Caco-2 (cell line): ENCODE measurements at regions of chr4 and their contacts with region 1.

Region 1: GRCh38 chr4:153643406-153644383 is 40.4 kb upstream of the TLR2 start:
- DNase-seq: peak in 1 of 2 experiments; percentile 14
- H3K4me3 ChIP-seq: no peak overlapping the region
- H3K4me3 Mint-ChIP-seq: no peak overlapping the region
- H3K27ac Mint-ChIP-seq: no peak overlapping the region
- H3K4me1 ChIP-seq: no peaks in the 10 kb centered on the region
- H3K4me1 Mint-ChIP-seq: peaks cover 6% of the 10 kb centered on the region
- H3K27me3 ChIP-seq: no peaks in the 10 kb centered on the region
- H3K27me3 Mint-ChIP-seq: no peaks in the 10 kb centered on the region
- CTCF ChIP-seq: peak in 1 of 2 experiments; percentile 30

Region 2: DNA sequence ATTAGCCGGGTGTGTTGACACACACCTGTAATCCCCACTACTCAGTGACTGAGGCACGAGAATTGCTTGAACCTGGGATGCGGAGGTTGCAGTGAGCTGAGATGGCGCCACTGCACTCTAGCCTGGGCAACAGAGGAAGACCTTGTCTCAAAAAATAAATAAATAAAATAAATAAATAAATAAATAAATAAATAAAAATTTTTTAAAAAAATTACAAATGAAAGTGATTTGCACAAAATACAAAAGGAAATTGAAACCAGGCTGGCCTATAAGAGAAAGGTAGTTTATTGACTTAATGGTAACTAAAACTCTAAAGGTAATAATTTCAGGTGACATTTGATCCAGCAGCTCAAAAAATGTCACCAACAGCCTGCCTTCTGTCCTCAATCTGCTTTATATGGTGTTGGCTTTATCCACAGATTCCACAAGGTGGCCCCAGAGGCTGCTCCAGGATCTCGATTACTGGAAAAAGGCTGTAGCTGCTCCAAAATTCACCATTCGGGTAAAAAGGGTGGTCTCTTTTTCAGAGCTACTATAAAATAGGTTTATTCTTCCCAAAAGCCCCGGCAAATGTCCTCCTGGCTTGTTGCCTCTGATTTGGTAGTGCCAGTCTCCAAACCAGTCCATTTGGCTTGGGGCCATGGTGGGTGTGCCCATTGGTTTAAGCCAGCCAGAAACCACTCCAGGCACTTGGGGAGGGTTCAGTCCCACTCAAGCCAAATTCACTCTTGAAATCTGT is 500.8 kb before region 1 on chr4:
- CTCF ChIA-PET with region 1: interaction called, 3 read pairs
- POLR2A ChIA-PET with region 1: no interaction called
- intact Hi-C with region 1: loop called (anchors 5 kb)
- DNase-seq: peak; percentile 74 to 78
- H3K4me3 ChIP-seq: no peak overlapping the region
- H3K4me3 Mint-ChIP-seq: no peak overlapping the region
- H3K27ac Mint-ChIP-seq: peak overlapping the region; percentile 53
- H3K4me1 ChIP-seq: peaks cover 8% of the 10 kb centered on the region
- H3K4me1 Mint-ChIP-seq: peaks cover 13% of the 10 kb centered on the region
- H3K27me3 ChIP-seq: no peaks in the 10 kb centered on the region
- H3K27me3 Mint-ChIP-seq: no peaks in the 10 kb centered on the region
- CTCF ChIP-seq: peak; percentile 73 to 78

Region 3: DNA sequence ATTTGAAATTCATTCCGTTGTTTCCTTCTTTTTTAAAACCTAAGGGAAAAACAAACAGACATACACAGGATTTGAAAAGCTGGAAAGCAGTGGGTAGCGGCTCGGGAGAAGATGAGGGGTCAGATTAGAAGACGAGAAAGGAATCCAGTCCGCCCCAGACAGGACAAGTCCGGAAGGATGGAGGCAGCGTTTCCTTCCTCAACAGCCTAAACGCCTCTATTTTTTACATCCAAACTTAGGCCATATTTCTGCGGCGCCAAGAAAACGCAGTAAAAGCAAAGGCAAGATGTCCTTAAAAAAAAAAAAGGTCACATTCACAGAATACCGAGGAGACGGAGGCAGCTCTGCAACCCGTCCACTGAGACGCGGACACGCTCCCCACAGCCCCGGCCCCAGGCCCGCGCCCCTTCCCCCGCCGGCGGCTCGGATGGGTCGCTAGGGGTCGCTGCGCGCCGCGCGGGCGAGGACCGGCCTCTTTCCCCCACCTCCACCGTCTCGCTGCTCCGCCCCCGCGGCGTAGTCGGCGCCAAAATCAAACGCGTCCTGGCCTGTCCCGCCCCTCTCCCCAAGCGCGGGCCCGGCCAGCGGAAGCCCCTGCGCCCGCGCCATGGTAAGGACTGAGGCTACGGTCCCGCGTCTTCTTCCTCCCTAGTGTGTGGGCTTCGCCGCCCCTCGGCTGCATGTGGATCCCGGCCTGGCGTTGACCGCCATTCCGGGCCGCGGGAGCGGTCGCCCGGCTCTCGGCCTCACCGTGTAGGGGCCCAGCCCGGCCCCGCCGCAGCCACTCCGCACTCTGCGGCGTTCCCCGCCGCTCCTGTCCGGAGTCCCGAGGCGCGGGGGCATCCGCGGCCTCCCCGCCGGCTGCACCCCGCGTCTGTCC is 299.3 kb before region 1 on chr4 and contains the start of gene MND1:
- CTCF ChIA-PET with region 1: interaction called, 5 read pairs
- POLR2A ChIA-PET with region 1: no interaction called
- intact Hi-C with region 1: loop called (anchors 2 kb)
- DNase-seq: peak; percentile 89 to 94
- H3K4me3 ChIP-seq: peak within 1 kb of the TSS; percentile 88
- H3K4me3 Mint-ChIP-seq: peak within 1 kb of the TSS; percentile 81
- H3K27ac Mint-ChIP-seq: peak within 1 kb of the TSS; percentile 82
- H3K4me1 ChIP-seq: peaks cover 17% of the 10 kb centered on the region
- H3K4me1 Mint-ChIP-seq: peaks cover 20% of the 10 kb centered on the region
- H3K27me3 ChIP-seq: no peaks in the 10 kb centered on the region
- H3K27me3 Mint-ChIP-seq: no peaks in the 10 kb centered on the region
- CTCF ChIP-seq: peak; percentile 62 to 95
- total RNA-seq, gene MND1: 19.8 and 21.8 TPM in 2 replicates

Region 4: GRCh38 chr4:153432968-153433753 is 210.5 kb before region 1 on chr4:
- CTCF ChIA-PET with region 1: no interaction called
- POLR2A ChIA-PET with region 1: no interaction called
- intact Hi-C with region 1: loop called (anchors 5 kb)
- DNase-seq: peak; percentile 69 to 73
- H3K4me3 ChIP-seq: no peak overlapping the region
- H3K4me3 Mint-ChIP-seq: no peak overlapping the region
- H3K27ac Mint-ChIP-seq: peak overlapping the region; percentile 6
- H3K4me1 ChIP-seq: no peaks in the 10 kb centered on the region; the same call in 1 of the 2 replicates
- H3K4me1 Mint-ChIP-seq: peaks cover 7% of the 10 kb centered on the region
- H3K27me3 ChIP-seq: no peaks in the 10 kb centered on the region
- H3K27me3 Mint-ChIP-seq: no peaks in the 10 kb centered on the region
- CTCF ChIP-seq: peak; percentile 37 to 67

Region 5: GRCh38 chr4:153555730-153556433 is 87.8 kb before region 1 on chr4:
- CTCF ChIA-PET with region 1: no interaction called
- POLR2A ChIA-PET with region 1: no interaction called
- intact Hi-C with region 1: no loop called
- DNase-seq: no peak
- H3K4me3 ChIP-seq: no peak overlapping the region
- H3K4me3 Mint-ChIP-seq: no peak overlapping the region
- H3K27ac Mint-ChIP-seq: no peak overlapping the region
- H3K4me1 ChIP-seq: no peaks in the 10 kb centered on the region
- H3K4me1 Mint-ChIP-seq: peaks cover 6% of the 10 kb centered on the region
- H3K27me3 ChIP-seq: no peaks in the 10 kb centered on the region
- H3K27me3 Mint-ChIP-seq: no peaks in the 10 kb centered on the region
- CTCF ChIP-seq: no peak

Region 6: DNA sequence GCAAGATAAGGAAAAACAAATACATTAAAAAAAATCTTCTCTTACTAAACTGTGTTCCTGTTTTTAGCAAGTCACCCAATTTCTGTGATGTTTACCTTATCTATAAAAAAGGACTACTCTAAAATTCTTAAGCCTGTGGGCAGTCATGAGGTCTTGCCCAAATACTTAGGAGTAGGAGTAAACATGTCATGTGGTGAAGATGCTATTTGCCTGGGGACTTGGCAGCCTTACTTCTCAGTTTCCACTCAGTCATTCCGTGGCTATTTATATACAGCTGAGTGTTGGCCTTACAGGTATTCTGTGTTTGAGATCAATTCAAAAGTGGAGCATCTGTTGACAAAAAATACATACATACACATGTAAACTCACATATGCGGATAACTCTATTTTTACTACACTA is 49.5 kb before region 1 on chr4:
- CTCF ChIA-PET with region 1: no interaction called
- POLR2A ChIA-PET with region 1: no interaction called
- intact Hi-C with region 1: loop called (anchors 1 kb)
- DNase-seq: no peak
- H3K4me3 ChIP-seq: no peak overlapping the region
- H3K4me3 Mint-ChIP-seq: no peak overlapping the region
- H3K27ac Mint-ChIP-seq: no peak overlapping the region
- H3K4me1 ChIP-seq: no peaks in the 10 kb centered on the region
- H3K4me1 Mint-ChIP-seq: no peaks in the 10 kb centered on the region
- H3K27me3 ChIP-seq: no peaks in the 10 kb centered on the region
- H3K27me3 Mint-ChIP-seq: no peaks in the 10 kb centered on the region
- CTCF ChIP-seq: no peak